MCF 10A (cell line): ENCODE measurements at regions of chr15 and their contacts with region 1.

Region 1: DNA sequence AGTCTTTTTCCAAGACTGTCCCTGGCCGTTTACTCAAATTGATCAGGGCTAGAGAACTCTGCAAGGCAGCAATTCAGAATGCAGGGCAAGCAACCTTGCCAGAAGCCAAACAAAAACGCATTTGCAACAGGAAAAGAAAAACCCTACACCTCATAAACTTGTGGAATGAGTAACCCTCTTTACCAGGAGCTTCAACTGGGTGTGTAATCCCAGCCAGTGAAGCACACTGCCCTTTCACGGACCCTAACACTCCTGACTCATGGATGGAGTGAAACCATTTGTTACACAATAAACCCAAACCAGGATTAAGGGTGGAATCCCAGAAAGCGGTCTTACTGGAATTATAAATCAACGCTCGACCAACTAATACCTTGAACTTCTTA is 14.8 kb upstream of the LDHAL6B start:
- DNase-seq: peak; percentile 96
- H3K4me3 Mint-ChIP-seq: peak overlapping the region; percentile 25
- H3K27ac Mint-ChIP-seq: peak overlapping the region; percentile 61
- H3K4me1 Mint-ChIP-seq: peaks cover 25% of the 10 kb centered on the region
- H3K27me3 Mint-ChIP-seq: no peaks in the 10 kb centered on the region
- CTCF ChIP-seq: no peak

Region 2: GRCh38 chr15:59169251-59169708 is 22.6 kb before region 1 on chr15:
- CTCF ChIA-PET with region 1: interaction called, 6 read pairs
- POLR2A ChIA-PET with region 1: interaction called, 9 read pairs
- intact Hi-C with region 1: loop called (anchors 2 kb)
- DNase-seq: peak; percentile 76
- H3K4me3 Mint-ChIP-seq: peak overlapping the region; percentile 10
- H3K27ac Mint-ChIP-seq: peak overlapping the region; percentile 98
- H3K4me1 Mint-ChIP-seq: peaks cover 51% of the 10 kb centered on the region
- H3K27me3 Mint-ChIP-seq: no peaks in the 10 kb centered on the region
- CTCF ChIP-seq: no peak